ENCODE measurements at regions of chr11 and their contacts with region 1.

Region 1: GRCh38 chr11:62508268-62509058 is 38.1 kb downstream of the AHNAK start:
- DNase-seq: peak; percentile 96
- H3K4me3 ChIP-seq: peak overlapping the region in 3 of 4 donors; percentile 18 to 23 (median 19)
- H3K27ac ChIP-seq: peak overlapping the region; percentile 83 to 89 (median 88)
- H3K4me1 ChIP-seq: peaks cover 0 to 87% (median 76%) of the 10 kb centered on the region in 4 donors
- H3K27me3 ChIP-seq: no peaks in the 10 kb centered on the region
- CTCF ChIP-seq: peak; percentile 33 to 72 (median 56)
- EP300 ChIP-seq: peak in 1 of 4 donors; percentile 83
- POLR2A ChIP-seq: peak in 1 of 2 donors; percentile 36

Region 2: DNA sequence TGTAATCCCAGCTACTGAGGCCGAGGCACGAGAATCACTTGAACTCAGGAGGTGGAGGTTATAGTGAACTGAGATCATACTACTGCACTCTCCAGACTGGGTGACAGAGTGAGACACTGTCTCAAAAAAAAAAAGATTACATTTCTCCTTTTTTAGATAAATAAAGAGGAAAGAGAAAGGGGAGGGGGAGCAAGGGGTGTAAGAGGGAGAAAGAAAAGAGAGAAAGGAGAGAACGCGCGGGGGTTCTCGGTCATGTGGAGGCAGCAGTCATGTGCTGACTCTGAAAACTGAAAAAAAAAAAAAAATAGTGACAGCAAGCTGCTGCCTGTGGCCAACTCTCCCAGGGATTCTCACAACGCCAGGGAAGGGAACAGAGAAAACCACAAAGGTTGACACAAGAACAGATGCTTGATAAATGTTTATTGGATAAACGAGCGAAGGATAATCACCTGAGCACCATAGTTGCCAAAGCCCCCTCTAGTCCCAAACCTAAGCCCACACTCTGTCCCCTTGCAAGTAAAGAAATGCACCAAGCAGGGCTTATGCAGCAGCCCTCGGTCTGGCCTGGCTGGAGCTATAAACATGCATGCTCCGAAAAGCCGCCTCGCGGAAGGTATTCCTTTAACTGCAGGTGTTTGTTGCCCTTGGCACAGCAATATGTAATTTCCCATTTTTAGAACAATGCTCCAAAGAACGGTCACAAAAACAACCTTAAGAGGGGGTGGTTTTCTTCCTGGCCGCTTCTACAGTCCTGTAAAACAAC is 75.1 kb before region 1 on chr11:
- intact Hi-C with region 1: loop called (anchors 2 kb)
- DNase-seq: peak; percentile 76
- H3K4me3 ChIP-seq: peak overlapping the region in 1 of 4 donors; percentile 5
- H3K27ac ChIP-seq: peak overlapping the region; percentile 77 to 85 (median 81)
- H3K4me1 ChIP-seq: peaks cover 0 to 82% (median 75%) of the 10 kb centered on the region in 4 donors
- H3K27me3 ChIP-seq: no peaks in the 10 kb centered on the region
- CTCF ChIP-seq: peak in 2 of 4 experiments; percentile 9 to 17
- EP300 ChIP-seq: no peak
- POLR2A ChIP-seq: no peak

Measured in sigmoid colon (tissue), 7 donors.